ENCODE measurements at regions of chr2 and their contacts with region 1.

Region 1: GRCh38 chr2:218395797-218396687 is 3.6 kb upstream of the CTDSP1 start:
- DNase-seq: peak; percentile 91 to 99 (median 94)
- ATAC-seq: peak; percentile 55 to 70
- H3K4me3 Mint-ChIP-seq: peak overlapping the region; percentile 89 to 98 (median 94)
- H3K27ac Mint-ChIP-seq: peak overlapping the region; percentile 96 to 100 (median 98)
- H3K4me1 Mint-ChIP-seq: peaks cover 21 to 53% (median 44%) of the 10 kb centered on the region in 4 donors
- H3K27me3 Mint-ChIP-seq: no peaks in the 10 kb centered on the region

Region 2: DNA sequence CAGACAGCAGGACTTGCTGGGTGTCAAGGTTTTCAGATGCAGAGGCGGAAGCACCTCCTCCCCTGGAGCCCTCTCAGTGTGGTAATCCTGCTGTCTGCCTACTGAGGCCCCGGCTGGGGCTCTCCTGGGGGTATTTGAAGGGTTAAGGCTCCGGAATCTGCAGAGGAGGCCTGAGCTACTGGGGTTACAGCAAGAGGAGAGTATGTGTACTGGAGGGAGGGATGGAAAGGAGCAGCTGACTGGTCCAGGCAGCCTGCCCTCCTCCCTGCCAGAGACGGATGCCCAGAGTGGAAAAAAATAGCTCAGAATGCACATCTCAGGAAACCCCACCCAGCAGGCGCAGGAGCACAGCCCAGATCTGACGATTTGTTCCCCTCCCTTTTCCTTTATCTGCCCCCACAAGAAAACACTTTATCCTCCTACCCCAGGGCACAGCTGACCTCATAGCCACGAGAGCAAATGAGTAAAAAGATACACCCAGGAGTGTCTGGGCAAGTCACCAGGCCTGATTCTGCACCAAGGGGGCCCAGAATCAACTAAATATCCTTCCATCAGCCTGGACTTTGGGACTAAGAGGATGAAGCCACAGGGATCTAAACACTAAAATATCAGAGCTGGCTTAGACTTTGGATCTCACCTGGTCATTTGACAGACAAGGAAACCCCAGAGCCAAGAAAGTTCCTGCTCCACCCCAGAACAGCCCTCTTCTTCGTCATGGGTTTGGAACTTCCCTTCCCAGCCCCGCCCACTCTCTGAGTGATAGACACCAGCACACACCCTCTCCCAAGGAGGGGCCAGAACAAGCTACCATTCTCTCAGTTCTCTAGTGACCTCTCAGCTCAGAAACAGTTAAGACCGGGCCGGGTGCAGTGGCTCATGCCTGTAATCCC is 109.2 kb before region 1 on chr2:
- POLR2A ChIA-PET with region 1: interaction called, 34 read pairs
- DNase-seq: peak; percentile 59 to 87 (median 79)
- ATAC-seq: peak; percentile 72 to 73
- H3K4me3 Mint-ChIP-seq: peak overlapping the region; percentile 90 to 99 (median 94)
- H3K27ac Mint-ChIP-seq: peak overlapping the region; percentile 97 to 100 (median 98)
- H3K4me1 Mint-ChIP-seq: peaks cover 49 to 94% (median 88%) of the 10 kb centered on the region in 4 donors
- H3K27me3 Mint-ChIP-seq: no peaks in the 10 kb centered on the region

Region 3: DNA sequence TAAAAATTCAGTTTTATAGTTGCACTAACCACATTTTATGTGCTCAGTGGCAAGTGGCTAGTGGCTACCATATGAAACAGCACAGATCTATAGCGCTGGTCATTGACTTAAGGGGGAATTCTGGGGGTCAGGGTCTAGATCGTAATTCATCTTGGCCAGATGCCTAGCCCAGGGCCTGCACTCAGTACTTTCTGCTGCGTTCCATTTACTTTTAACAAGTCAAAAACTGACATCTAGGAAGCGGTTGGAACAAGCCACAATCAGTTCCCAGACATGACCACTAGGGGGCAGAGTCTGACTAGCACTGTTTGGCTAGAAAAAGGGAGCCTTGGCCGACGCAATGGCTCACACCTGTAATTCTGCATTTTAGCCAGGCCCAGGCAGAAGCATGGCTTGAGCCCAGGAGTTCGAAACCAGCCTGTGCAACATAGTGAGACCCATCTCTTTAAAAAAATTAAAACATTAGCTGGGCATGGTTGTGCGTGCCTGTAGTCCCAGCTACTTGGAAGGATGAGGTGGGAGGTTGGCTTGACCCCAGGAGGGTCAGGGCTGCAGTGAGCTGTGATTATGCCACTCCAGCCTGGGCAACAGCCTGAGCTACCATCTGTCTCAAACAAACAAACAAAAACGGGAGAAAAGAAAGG is 94.7 kb before region 1 on chr2:
- POLR2A ChIA-PET with region 1: interaction called, 20 read pairs
- DNase-seq: peak; percentile 65 to 93 (median 86)
- ATAC-seq: peak; percentile 92 to 99
- H3K4me3 Mint-ChIP-seq: no peak overlapping the region
- H3K27ac Mint-ChIP-seq: peak overlapping the region in 9 of 10 donors; percentile 2 to 92 (median 66)
- H3K4me1 Mint-ChIP-seq: peaks cover 6 to 11% (median 7%) of the 10 kb centered on the region in 4 donors
- H3K27me3 Mint-ChIP-seq: no peaks in the 10 kb centered on the region

Region 4: DNA sequence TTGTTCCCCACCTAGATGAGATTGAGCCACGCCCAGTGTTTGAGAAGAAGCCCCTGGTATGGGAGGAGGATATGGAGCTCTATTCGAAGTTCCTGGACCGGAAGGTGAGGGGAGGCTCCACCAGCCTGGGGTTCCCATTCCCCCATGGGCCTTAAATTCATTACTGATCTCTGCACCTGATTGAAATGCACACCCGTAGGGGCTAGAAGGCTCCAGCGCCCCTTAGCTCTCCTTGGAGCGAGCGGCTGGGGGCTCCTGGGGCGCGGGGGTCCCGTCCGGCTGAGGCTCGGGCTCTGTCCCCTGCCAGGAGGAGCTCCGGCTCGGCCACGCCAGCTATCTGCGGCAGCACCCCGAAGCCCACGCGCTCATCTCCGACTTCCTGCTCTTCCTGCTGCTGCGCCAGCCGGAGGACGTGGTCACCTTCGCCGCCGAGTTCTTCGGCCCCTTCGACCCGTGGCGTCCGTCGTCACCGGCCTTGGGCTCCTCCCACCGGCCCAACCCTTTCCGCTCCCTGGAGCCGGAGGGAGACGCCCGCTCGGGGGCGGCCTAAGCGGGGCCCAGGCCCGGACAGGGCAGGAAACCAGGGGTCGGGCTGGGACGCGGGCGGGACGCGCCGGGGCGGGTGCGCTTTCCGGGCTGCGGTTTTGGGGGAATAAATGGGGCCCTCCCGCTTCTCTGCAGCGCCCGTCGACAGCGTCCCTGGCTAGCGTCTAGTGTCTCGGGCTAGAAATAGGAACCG is 28.5 kb before region 1 on chr2:
- POLR2A ChIA-PET with region 1: interaction called, 10 read pairs
- DNase-seq: peak; percentile 49 to 80 (median 68)
- ATAC-seq: peak; percentile 74 to 82
- H3K4me3 Mint-ChIP-seq: peak overlapping the region; percentile 71 to 88 (median 82)
- H3K27ac Mint-ChIP-seq: peak overlapping the region; percentile 81 to 94 (median 88)
- H3K4me1 Mint-ChIP-seq: peaks cover 11 to 49% (median 40%) of the 10 kb centered on the region in 4 donors
- H3K27me3 Mint-ChIP-seq: no peaks in the 10 kb centered on the region